ENCODE measurements at regions of chr7 and their contacts with region 1.

Region 1: GRCh38 chr7:77247206-77247850 is 47.7 kb upstream of the FGL2 start:
- DNase-seq: peak; percentile 49
- H3K4me3 ChIP-seq: no peak overlapping the region
- H3K27ac ChIP-seq: no peak overlapping the region
- H3K27me3 ChIP-seq: no peaks in the 10 kb centered on the region
- CTCF ChIP-seq: peak; percentile 92

Region 2: GRCh38 chr7:77226357-77226839 is 20.9 kb before region 1 on chr7:
- CTCF ChIA-PET with region 1: interaction called, 15 read pairs
- POLR2A ChIA-PET with region 1: no interaction called
- DNase-seq: no peak
- H3K4me3 ChIP-seq: no peak overlapping the region
- H3K27ac ChIP-seq: no peak overlapping the region
- H3K27me3 ChIP-seq: no peaks in the 10 kb centered on the region
- CTCF ChIP-seq: no peak

Region 3: DNA sequence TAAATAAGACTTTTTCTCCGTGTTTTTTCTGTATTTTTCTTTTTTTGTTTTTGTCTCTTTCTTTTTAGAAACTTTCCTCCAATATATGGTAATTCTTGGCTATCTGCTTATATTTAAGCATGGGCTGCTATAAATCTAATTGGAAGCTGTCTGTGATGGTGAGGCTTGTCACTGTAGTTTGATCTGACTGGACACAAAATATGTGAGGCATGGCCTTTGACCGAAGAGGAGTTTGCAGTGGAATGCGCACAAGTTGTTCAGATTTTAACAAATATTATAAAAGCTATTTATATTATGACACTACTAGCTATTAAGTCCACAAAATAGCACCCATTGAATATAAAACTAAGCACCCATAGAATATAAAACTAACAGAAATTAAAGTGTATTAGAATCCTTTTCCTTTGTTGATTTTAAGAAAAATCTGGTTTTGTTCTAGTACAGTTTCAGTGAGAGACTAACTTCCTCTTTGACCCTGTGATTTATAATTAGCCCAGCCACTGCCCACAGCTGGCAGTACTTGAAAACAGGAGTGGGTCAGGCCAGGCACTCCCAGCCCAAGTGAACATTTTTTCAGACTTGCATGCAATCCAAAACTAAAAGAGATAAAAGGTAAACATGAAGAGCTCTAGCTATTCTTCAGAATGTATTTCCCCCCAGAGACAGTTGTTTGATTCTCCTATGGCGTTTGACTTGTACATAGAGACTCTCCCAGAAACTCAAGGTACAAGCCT is 22.2 kb after region 1 on chr7:
- CTCF ChIA-PET with region 1: interaction called, 54 read pairs
- POLR2A ChIA-PET with region 1: no interaction called
- DNase-seq: no peak
- H3K4me3 ChIP-seq: no peak overlapping the region
- H3K27ac ChIP-seq: no peak overlapping the region
- H3K27me3 ChIP-seq: no peaks in the 10 kb centered on the region
- CTCF ChIP-seq: no peak

Region 4: GRCh38 chr7:77326696-77327628 is 79.6 kb after region 1 on chr7:
- CTCF ChIA-PET with region 1: interaction called, 45 read pairs
- POLR2A ChIA-PET with region 1: no interaction called
- DNase-seq: peak; percentile 82
- H3K4me3 ChIP-seq: no peak overlapping the region
- H3K27ac ChIP-seq: peak overlapping the region; percentile 74
- H3K27me3 ChIP-seq: no peaks in the 10 kb centered on the region
- CTCF ChIP-seq: no peak

Measured in AG04450 (cell line).